K562 (cell line): ENCODE measurements at regions of chr7 and their contacts with region 1.

Region 1: DNA sequence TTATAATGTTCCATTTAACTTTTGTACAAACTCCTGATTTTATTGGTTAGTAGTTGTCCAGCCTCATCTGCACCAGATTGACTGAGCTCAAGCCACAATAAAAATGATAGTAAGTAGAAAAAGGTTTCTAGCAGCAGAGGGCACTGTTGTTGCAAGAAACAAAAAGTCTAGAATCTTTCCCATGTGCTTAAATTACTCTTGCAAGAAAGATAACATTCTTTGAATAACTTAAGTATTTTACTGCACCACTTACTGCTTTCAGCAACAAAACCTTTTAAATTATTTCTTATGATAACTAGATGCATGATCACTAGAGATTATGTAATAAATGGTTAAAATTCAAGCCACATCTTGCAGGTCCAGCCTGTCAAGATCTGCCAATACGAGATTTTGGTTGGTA is 27.0 kb downstream of the LMOD2 start:
- DNase-seq: peak; percentile 32 to 70 (median 41)
- ATAC-seq: peak; percentile 79
- H3K4me3 ChIP-seq: no peak overlapping the region
- H3K27ac ChIP-seq: no peak overlapping the region
- H3K4me1 ChIP-seq: no peaks in the 10 kb centered on the region
- H3K27me3 ChIP-seq: no peaks in the 10 kb centered on the region
- CTCF ChIP-seq: peak; percentile 54 to 82 (median 59); a peak in 5 of 6 replicates
- EP300 ChIP-seq: no peak
- POLR2A ChIP-seq: no peak
- RAD21 ChIP-seq: peak; percentile 87 to 92

Region 2: DNA sequence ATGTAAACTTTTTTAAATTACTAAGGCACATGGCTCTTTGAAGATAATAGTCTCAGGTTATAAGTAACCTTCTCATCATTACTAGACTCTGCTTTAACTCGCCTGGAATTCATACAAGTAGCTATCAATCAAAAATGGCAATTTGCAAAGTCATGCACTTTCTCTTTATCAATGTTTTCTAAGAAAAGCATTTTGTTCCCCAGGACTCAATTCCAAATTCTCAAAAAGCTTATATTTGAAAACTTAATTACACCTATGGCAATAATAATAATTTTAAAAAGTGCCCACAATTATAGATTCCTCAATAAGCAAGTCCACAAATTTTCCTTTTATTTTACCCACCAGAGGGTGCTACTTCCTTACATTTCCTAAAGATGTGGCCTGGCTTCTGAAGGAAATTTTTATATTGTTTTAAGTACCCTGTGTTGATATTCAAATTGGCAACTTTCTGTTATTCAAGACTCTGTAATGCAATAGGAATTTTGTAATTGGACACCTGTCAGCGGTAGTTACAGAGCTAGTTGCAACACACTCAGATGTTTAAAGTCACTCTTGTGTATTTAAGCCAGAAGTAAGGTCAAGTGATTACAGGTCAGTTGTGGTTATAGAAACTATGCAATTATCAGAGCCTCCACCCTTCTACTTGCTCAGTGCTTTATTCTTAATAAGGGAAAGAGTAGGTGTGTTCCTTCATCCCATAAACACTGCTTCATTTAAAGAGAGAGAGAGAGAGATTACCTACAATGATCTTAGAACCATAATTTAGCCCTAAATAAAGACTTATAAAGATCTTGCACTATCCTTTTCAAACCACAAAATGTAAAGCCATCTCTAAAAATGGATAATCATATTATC is 115.2 kb after region 1 on chr7:
- CTCF ChIA-PET with region 1: no interaction called
- POLR2A ChIA-PET with region 1: no interaction called
- in situ Hi-C with region 1: no loop called
- intact Hi-C with region 1: loop called (anchors 1 kb)
- DNase-seq: peak in 3 of 4 experiments; percentile 27 to 59 (median 28)
- ATAC-seq: peak; percentile 78
- H3K4me3 ChIP-seq: no peak overlapping the region
- H3K27ac ChIP-seq: no peak overlapping the region
- H3K4me1 ChIP-seq: peaks cover 0 to 13% of the 10 kb centered on the region in 2 experiments; a peak in 1 of 5 replicates
- H3K27me3 ChIP-seq: no peaks in the 10 kb centered on the region
- CTCF ChIP-seq: peak; percentile 42 to 80 (median 45); a peak in 4 of 6 replicates
- EP300 ChIP-seq: no peak
- POLR2A ChIP-seq: no peak
- RAD21 ChIP-seq: peak; percentile 87 to 91

Region 3: DNA sequence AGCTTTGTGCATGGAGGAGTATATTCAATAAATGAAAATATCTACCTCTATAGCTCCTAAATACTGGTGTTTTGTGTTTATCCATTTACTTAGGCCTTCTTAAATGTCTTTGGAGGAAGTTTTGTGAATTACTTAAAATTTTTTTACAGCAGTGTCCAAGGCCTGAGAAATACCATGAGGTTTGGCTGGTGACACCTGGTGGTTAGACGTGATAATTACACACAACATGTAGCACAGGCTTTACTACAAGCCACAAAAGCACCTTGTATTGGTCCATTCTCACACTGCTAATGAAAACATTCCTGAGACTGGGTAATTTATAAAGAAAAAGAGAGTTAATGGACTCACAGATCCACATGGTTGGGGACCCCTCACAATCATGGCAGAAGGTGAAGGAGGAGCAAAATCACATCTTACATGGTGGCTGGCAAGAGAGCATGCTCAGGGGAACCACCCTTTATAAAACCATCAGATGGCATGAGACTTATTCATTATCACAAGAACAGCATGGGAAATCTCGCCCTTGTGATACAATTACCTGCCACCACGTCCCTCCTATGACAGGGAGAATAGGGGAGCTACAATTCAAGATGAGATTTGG is 182.9 kb after region 1 on chr7:
- CTCF ChIA-PET with region 1: interaction called, 37 read pairs
- POLR2A ChIA-PET with region 1: no interaction called
- in situ Hi-C with region 1: loop called (anchors 5 kb)
- intact Hi-C with region 1: loop called (anchors 1 kb)
- DNase-seq: peak; percentile 42 to 80 (median 68)
- ATAC-seq: peak; percentile 96
- H3K4me3 ChIP-seq: no peak overlapping the region
- H3K27ac ChIP-seq: no peak overlapping the region
- H3K4me1 ChIP-seq: no peaks in the 10 kb centered on the region
- H3K27me3 ChIP-seq: 0 out of 5 replicates have a peak, but pooled peaks cover 0 to 5% of the 10 kb centered on the region in 2 experiments
- CTCF ChIP-seq: peak; percentile 65 to 84 (median 72)
- EP300 ChIP-seq: no peak
- POLR2A ChIP-seq: no peak
- RAD21 ChIP-seq: peak; percentile 92 to 93

Region 4: GRCh38 chr7:123871998-123872867 is 189.5 kb after region 1 on chr7:
- CTCF ChIA-PET with region 1: interaction called, 14 read pairs
- POLR2A ChIA-PET with region 1: no interaction called
- in situ Hi-C with region 1: no loop called
- intact Hi-C with region 1: loop called (anchors 2 kb)
- DNase-seq: peak in 2 of 4 experiments; percentile 45 to 67
- ATAC-seq: peak; percentile 95
- H3K4me3 ChIP-seq: no peak overlapping the region
- H3K27ac ChIP-seq: no peak overlapping the region
- H3K4me1 ChIP-seq: no peaks in the 10 kb centered on the region
- H3K27me3 ChIP-seq: peaks cover 0 to 9% of the 10 kb centered on the region in 2 experiments; a peak in 1 of 5 replicates
- CTCF ChIP-seq: peak; percentile 62 to 82 (median 79)
- EP300 ChIP-seq: no peak
- POLR2A ChIP-seq: no peak
- RAD21 ChIP-seq: peak; percentile 89 to 94